Dendritic cell treated with granulocyte-macrophage colony-stimulating factor and Interleukin-4, amounts not matched to agents 40 ng/mL and 50 ng/mL, for 4 days (primary cell): ENCODE measurements at regions of chr2 and their contacts with region 1.

Region 1: GRCh38 chr2:186853951-186854350 is 5.0 kb upstream of the ZSWIM2 start:
- H3K4me3 Mint-ChIP-seq: no peak overlapping the region
- H3K27ac Mint-ChIP-seq: no peak overlapping the region
- H3K4me1 Mint-ChIP-seq: peaks cover 16% of the 10 kb centered on the region
- H3K27me3 Mint-ChIP-seq: no peaks in the 10 kb centered on the region

Region 2: GRCh38 chr2:185895828-185896693 is 957.9 kb before region 1 on chr2:
- intact Hi-C with region 1: no loop called
- H3K4me3 Mint-ChIP-seq: no peak overlapping the region
- H3K27ac Mint-ChIP-seq: no peak overlapping the region
- H3K4me1 Mint-ChIP-seq: no peaks in the 10 kb centered on the region
- H3K27me3 Mint-ChIP-seq: no peaks in the 10 kb centered on the region

Region 3: GRCh38 chr2:187299122-187299906 is 445.4 kb after region 1 on chr2:
- intact Hi-C with region 1: loop called (anchors 10 kb)
- H3K4me3 Mint-ChIP-seq: no peak overlapping the region
- H3K27ac Mint-ChIP-seq: peak overlapping the region; percentile 5
- H3K4me1 Mint-ChIP-seq: peaks cover 9% of the 10 kb centered on the region
- H3K27me3 Mint-ChIP-seq: no peaks in the 10 kb centered on the region

Region 4: GRCh38 chr2:187483537-187483936 is 629.6 kb after region 1 on chr2:
- intact Hi-C with region 1: no loop called
- H3K4me3 Mint-ChIP-seq: no peak overlapping the region
- H3K27ac Mint-ChIP-seq: no peak overlapping the region
- H3K4me1 Mint-ChIP-seq: peaks cover 9% of the 10 kb centered on the region
- H3K27me3 Mint-ChIP-seq: no peaks in the 10 kb centered on the region